ENCODE measurements at regions of chr15 and their contacts with region 1.

Region 1: DNA sequence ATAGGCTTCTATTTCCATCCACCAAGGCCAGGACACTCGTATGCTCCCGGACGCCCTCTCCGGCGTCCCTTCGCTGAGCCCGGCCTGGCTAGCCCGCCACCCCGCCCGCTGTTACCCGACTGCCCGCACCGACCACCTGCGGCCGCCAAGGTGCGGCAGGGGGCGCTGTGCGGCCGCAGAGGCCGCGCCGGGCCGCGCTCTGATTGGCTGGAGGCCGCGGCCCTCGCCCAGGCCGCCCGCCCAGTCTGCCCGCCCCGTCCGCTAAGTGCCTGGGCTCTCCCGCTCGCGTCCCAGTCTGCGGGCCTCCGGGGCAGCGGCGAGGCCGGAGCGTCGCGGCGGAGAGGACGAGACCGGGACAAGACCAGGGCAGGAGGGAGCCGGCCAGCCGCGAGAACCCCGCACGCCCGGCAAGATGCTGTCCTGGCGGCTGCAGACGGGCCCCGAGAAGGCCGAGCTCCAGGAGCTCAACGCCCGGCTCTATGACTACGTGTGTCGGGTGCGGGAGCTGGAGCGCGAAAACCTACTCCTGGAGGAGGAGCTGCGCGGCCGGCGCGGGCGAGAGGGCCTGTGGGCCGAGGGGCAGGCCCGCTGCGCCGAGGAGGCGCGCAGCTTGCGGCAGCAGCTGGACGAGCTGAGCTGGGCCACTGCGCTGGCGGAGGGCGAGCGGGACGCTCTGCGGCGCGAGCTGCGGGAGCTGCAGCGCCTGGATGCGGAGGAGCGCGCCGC is at the start of gene SYNM:
- DNase-seq: peak; percentile 83
- ATAC-seq: peak; percentile 95
- H3K4me3 ChIP-seq: peak within 1 kb of the TSS; percentile 50
- H3K27ac ChIP-seq: peak within 1 kb of the TSS; percentile 30
- H3K4me1 ChIP-seq: peaks cover 21% of the 10 kb centered on the region
- H3K27me3 ChIP-seq: peaks cover 46% of the 10 kb centered on the region
- CTCF ChIP-seq: peak; percentile 67
- total RNA-seq, gene SYNM: 19.5 TPM

Region 2: GRCh38 chr15:99213187-99213811 is 108.3 kb after region 1 on chr15:
- intact Hi-C with region 1: loop called (anchors 5 kb)
- DNase-seq: peak; percentile 76
- ATAC-seq: peak; percentile 84
- H3K4me3 ChIP-seq: no peak overlapping the region
- H3K27ac ChIP-seq: no peak overlapping the region
- H3K4me1 ChIP-seq: no peaks in the 10 kb centered on the region
- H3K27me3 ChIP-seq: no peaks in the 10 kb centered on the region
- CTCF ChIP-seq: peak; percentile 94